ENCODE measurements at regions of chr13 and their contacts with region 1.

Region 1: GRCh38 chr13:26707122-26708006 is 53.2 kb downstream of the GPR12 start:
- DNase-seq: peak; percentile 80
- H3K4me3 Mint-ChIP-seq: no peak overlapping the region
- H3K27ac Mint-ChIP-seq: no peak overlapping the region
- H3K4me1 Mint-ChIP-seq: no peaks in the 10 kb centered on the region
- H3K27me3 Mint-ChIP-seq: no peaks in the 10 kb centered on the region

Region 2: DNA sequence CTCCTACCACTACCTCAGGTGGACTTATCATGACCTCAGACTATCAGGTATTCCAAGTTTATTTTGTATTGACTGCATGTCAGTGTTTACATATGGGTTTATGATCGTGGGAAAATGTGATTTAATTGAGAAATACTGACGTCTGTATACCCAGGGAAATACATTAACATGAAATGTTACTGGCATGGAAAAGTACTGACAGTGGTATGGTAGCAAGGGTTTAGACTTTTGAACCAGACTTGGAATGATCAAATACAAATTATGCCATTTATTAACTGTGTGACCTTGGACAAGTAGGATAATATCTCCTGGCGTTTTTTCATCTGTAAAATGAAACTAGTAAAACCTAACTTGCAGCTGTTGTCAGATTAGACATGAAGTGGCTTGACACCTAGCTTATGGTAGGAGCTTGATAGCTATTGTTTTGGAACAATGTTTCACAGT is 305.8 kb before region 1 on chr13:
- intact Hi-C with region 1: no loop called
- DNase-seq: no peak
- H3K4me3 Mint-ChIP-seq: no peak overlapping the region
- H3K27ac Mint-ChIP-seq: no peak overlapping the region
- H3K4me1 Mint-ChIP-seq: peaks cover 2% of the 10 kb centered on the region
- H3K27me3 Mint-ChIP-seq: no peaks in the 10 kb centered on the region

Region 3: DNA sequence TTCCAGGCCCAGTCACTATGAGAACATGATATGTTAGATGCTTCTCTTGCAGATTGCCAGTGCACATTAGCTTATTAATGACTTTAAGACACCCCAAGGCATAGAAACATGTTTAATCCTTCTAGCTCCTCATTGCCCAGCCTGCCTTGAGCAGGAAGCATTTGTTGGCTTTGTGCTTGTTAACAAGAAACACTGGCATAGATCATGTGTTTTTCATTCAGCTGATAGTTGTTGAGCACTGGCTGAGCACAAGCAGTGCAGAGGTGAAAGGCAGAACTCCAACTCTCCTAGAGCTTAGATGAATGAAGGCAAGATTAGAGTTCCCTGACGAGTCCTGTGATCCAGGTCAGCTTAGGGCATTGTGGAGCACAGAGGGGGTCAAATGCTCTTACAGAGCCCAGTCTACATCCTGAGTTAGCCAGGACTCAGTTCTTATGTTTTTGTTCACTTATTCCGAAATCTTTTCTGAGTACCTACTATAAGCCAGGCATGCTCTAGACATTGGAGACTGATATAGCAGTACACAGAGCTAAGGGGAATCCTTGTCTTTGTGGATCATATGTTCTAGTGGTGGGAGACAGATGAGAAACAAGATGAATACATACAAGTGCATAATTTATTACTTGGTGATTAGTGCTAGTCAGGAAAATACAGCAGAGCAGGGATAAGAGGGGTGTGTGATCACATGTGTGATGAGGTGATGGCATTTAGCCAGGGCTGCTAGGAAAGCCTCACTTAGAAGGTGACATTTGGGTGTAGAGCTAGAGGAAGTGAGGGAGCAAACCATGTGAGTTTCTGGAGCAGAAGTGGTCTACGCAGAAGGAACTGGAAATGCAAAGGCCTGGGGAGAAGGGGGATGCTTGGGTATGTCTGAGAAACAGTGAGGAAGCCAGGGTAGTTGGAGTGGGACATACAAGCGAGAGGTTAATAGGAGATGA is 48.6 kb before region 1 on chr13:
- intact Hi-C with region 1: no loop called
- DNase-seq: no peak
- H3K4me3 Mint-ChIP-seq: no peak overlapping the region
- H3K27ac Mint-ChIP-seq: no peak overlapping the region
- H3K4me1 Mint-ChIP-seq: no peaks in the 10 kb centered on the region
- H3K27me3 Mint-ChIP-seq: no peaks in the 10 kb centered on the region

Region 4: DNA sequence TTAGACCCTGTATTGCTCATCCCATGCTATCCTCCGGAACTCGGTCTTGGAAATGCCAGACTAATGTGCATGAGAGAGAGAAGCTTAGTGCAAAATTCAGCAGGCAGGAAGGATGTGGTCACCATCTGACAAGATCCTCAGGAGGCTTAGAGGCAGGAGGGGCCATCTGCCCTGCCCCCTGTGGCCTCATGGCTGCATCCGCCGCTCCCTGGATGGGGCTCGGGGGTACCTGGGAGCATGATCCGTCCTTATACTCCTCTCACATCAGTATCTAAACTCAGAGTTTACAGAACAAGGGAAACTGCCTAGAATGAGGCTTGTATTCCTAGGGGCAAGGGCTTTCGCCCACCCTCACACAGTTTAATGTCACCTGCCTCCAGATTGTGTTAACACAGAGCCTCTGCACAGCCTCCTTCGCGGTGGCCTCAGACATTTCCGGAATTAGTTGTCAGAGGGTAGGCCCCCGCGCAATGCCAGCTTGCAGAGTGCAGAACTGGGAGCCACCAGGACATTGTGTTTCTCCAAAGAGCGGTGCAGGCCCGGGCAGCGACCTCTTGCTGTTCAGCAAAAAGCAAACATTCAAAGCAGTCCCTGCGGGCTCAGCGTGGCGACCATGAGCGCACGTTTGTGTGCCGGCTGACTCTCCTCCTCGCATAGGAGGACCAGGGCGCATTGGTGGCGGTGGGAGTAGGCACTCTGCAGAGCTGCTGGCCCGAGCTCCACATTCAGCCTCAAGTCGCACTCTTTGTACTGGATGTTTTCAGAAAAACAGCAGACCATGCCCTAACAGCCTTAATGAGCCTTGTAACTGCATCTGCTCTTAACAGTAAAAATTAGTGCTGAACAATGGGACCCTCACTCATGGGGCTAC is 14.1 kb after region 1 on chr13:
- intact Hi-C with region 1: no loop called
- DNase-seq: peak; percentile 76
- H3K4me3 Mint-ChIP-seq: peak overlapping the region; percentile 77
- H3K27ac Mint-ChIP-seq: peak overlapping the region; percentile 78
- H3K4me1 Mint-ChIP-seq: peaks cover 17% of the 10 kb centered on the region
- H3K27me3 Mint-ChIP-seq: no peaks in the 10 kb centered on the region

Region 5: GRCh38 chr13:26872525-26873385 is 165.4 kb after region 1 on chr13:
- intact Hi-C with region 1: loop called (anchors 1 kb)
- DNase-seq: peak; percentile 84
- H3K4me3 Mint-ChIP-seq: no peak overlapping the region
- H3K27ac Mint-ChIP-seq: no peak overlapping the region
- H3K4me1 Mint-ChIP-seq: no peaks in the 10 kb centered on the region
- H3K27me3 Mint-ChIP-seq: peaks cover 1% of the 10 kb centered on the region

Region 6: DNA sequence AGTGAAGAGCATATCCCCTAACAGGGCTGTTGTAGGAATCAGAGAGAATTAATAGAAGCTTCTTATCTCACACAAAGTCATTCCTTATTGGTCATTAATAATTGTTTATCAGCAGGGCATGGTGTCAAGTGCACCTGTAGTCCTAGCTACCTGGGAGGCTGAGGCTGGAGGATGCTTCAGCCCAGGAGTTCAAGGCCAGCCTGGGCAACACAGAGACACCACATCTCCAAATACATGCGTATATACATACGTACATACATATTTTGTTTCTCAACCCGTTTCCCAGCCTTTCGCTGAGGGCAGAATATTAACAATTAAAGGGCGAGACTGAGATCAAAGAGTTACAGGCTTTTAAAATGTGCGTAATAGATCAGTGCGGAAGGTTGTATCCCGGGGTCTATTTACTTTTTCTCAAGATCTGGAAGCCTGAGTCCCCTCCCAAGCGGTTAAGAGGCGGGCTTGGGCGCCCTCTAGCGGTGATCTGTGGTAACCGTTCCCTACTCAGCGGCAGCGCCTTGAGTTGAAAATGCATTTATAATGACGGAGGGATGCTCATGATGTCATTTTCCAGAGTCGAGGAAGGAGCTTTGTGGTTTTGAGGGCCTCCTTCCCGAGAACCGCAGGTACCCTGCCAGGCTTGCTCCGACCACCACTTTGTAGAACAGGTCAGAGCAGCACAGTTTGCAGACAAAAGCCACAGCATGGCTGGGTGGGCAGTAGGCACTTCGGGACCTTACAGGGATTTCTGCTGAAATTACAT is 222.8 kb after region 1 on chr13:
- intact Hi-C with region 1: loop called (anchors 5 kb)
- DNase-seq: peak; percentile 90
- H3K4me3 Mint-ChIP-seq: no peak overlapping the region
- H3K27ac Mint-ChIP-seq: no peak overlapping the region
- H3K4me1 Mint-ChIP-seq: peaks cover 3% of the 10 kb centered on the region
- H3K27me3 Mint-ChIP-seq: peaks cover 7% of the 10 kb centered on the region

Region 7: DNA sequence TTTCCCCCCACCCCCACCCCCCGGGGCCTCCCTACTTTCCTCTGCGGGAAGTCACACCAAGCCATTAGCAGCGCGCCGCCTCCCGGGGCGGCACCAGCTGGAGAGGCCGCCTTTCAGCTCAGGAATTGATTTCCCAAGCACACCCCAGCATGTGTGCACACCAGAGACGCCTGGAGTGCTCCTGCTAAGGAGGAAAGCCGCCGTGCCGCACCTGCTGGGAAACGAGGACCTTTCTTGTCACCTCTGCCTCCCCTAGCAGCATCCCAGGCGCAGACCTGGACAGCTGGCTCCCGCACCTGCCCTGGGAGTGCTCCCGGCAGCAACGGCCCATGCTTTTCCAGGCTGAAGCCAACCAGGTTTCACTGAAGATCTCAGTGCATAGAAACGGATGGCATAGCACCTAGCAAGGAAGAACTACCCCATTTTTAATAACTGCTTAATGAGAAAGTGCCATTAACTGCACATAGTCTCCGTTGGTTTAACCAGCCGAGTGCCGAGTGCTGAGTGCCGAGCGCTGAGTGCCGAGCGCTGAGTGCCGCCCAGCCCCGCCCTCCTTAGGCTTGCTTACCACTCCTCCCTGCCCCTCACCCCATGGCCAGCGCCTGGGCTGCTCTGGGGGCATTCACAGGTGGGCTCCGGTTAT is 299.3 kb after region 1 on chr13:
- intact Hi-C with region 1: no loop called
- DNase-seq: no peak
- H3K4me3 Mint-ChIP-seq: peak overlapping the region; percentile 22
- H3K27ac Mint-ChIP-seq: no peak overlapping the region
- H3K4me1 Mint-ChIP-seq: peaks cover 4% of the 10 kb centered on the region
- H3K27me3 Mint-ChIP-seq: peaks cover 47% of the 10 kb centered on the region

Measured in activated CD4-positive, alpha-beta T cell treated with anti-CD3 and anti-CD28 coated beads, Interleukin-2, amount 10 ng/mL, durations not matched to agents 24 days and 14 days (primary cell).